Activated CD4-positive, alpha-beta memory T cell treated with anti-CD3 and anti-CD28 coated beads, Interleukin-2, amount 10 ng/mL, durations not matched to agents 7 days and 5 days (primary cell): ENCODE measurements at regions of chr15 and their contacts with region 1.

Region 1: GRCh38 chr15:55407949-55408791 is at the starts of genes CCPG1 and PIERCE2:
- DNase-seq: peak; percentile 92
- H3K4me3 Mint-ChIP-seq: peak within 1 kb of the TSS; percentile 91
- H3K27ac Mint-ChIP-seq: peak within 1 kb of the TSS; percentile 86
- H3K4me1 Mint-ChIP-seq: peaks cover 34% of the 10 kb centered on the region
- H3K27me3 Mint-ChIP-seq: no peaks in the 10 kb centered on the region
- total RNA-seq, gene CCPG1: 33.3 to 33.4 TPM
- total RNA-seq, gene PIERCE2: not detected

Region 2: DNA sequence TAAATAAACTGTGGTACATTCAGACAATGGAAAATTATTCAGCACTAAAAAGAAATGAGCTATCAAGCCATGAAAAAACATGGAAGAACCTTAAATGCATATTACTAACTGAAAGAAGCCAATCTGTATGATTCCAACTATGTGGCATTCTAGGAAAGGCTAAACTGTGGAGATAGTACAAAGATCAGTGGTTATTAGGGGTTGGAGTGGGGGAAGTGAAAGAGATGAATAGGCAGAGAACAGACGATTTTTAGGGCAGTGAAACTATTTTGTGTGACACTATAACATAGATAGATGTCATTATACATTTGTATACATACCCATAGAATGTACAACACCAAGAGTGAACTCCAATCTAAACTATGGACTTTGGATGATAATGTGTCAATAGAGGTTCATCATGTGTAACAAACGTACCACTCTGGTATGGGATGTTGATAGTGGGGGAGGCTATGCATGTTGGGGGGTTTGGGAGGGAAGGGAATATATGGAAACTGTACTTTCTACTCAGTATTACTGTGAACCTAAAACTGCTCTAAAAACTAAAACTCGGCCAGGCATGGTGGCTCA is 147.5 kb before region 1 on chr15:
- CTCF ChIA-PET with region 1: no interaction called
- POLR2A ChIA-PET with region 1: no interaction called
- DNase-seq: no peak
- H3K4me3 Mint-ChIP-seq: no peak overlapping the region
- H3K27ac Mint-ChIP-seq: no peak overlapping the region
- H3K4me1 Mint-ChIP-seq: peaks cover 50% of the 10 kb centered on the region
- H3K27me3 Mint-ChIP-seq: no peaks in the 10 kb centered on the region

Region 3: GRCh38 chr15:55318588-55319494 is 89.3 kb before region 1 on chr15 and contains the starts of genes PIGB and PIGBOS1:
- CTCF ChIA-PET with region 1: interaction called, 19 read pairs
- POLR2A ChIA-PET with region 1: interaction called, 46 read pairs
- DNase-seq: peak; percentile 85
- H3K4me3 Mint-ChIP-seq: peak within 1 kb of the TSS; percentile 98
- H3K27ac Mint-ChIP-seq: peak within 1 kb of the TSS; percentile 95
- H3K4me1 Mint-ChIP-seq: peaks cover 56% of the 10 kb centered on the region
- H3K27me3 Mint-ChIP-seq: no peaks in the 10 kb centered on the region
- total RNA-seq, gene PIGB: 28.9 to 29.3 TPM
- total RNA-seq, gene PIGBOS1: 14.7 to 14.9 TPM

Region 4: GRCh38 chr15:55360256-55360655 is 47.9 kb before region 1 on chr15:
- CTCF ChIA-PET with region 1: interaction called, 11 read pairs
- POLR2A ChIA-PET with region 1: no interaction called
- DNase-seq: no peak
- H3K4me3 Mint-ChIP-seq: no peak overlapping the region
- H3K27ac Mint-ChIP-seq: no peak overlapping the region
- H3K4me1 Mint-ChIP-seq: no peaks in the 10 kb centered on the region
- H3K27me3 Mint-ChIP-seq: no peaks in the 10 kb centered on the region

Region 5: GRCh38 chr15:55383687-55384086 is 24.5 kb before region 1 on chr15:
- CTCF ChIA-PET with region 1: interaction called, 10 read pairs
- POLR2A ChIA-PET with region 1: no interaction called
- DNase-seq: no peak
- H3K4me3 Mint-ChIP-seq: no peak overlapping the region
- H3K27ac Mint-ChIP-seq: no peak overlapping the region
- H3K4me1 Mint-ChIP-seq: peaks cover 2% of the 10 kb centered on the region
- H3K27me3 Mint-ChIP-seq: no peaks in the 10 kb centered on the region

Region 6: DNA sequence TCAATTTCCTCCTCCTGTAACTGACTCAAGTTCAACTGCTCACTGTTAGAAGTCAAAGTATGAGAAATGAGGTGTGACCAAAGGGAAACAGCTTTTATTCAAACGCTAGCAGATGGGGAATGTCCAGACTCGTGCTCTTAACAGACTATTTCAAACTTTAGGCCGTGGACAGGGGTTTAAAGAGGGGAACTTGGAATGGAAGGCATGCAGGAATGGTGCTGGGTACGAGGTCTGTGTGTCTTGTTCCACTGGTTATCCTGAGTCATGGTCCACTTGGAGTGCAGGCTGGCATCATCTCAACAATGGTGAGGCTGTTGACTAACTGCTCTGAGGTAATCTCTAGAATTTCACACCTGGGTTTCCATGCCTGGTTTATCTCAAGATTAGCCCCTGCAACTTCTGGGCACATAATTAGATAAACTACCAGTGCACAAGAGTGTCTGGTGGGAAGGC is 122.7 kb after region 1 on chr15:
- CTCF ChIA-PET with region 1: no interaction called
- POLR2A ChIA-PET with region 1: no interaction called
- DNase-seq: no peak
- H3K4me3 Mint-ChIP-seq: no peak overlapping the region
- H3K27ac Mint-ChIP-seq: no peak overlapping the region
- H3K4me1 Mint-ChIP-seq: peaks cover 7% of the 10 kb centered on the region
- H3K27me3 Mint-ChIP-seq: peaks cover 9% of the 10 kb centered on the region